Naive thymus-derived CD4-positive, alpha-beta T cell (primary cell): ENCODE measurements at regions of chr1 and their contacts with region 1.

Region 1: DNA sequence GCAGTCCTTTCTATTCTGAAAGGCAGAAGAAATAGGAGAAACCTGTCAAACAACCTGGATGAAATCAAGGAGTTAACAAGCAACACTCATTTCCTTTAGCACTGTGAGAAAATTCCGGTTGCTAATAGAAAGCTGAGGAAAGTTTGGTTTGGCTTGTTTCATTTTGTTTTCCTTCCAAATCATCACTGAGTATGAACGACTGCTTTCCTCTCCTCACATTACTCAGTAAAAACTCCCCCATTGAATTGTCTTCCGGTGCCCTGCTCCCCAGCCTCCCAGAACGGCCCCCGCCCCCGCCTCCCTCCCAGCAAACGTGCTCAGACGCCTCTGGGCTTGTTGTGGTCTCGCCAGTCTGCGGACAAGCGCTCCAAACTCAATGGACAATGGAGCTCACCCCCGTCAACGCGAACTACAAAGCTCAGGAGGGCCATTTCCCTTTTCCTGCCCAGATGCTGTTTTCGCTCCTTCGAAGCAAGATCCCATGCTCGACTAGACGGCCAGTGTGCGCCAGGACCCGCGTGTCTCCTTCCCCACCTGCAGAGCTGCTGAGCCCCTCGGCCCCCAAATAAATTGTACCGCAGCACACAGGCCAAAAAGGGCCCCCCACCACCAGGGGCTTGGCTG is 747 bp downstream of the STX6 start:
- DNase-seq: peak; percentile 12 to 67 (median 33)
- ATAC-seq: peak; percentile 21
- H3K4me3 ChIP-seq: peak overlapping the region; percentile 84
- H3K4me3 Mint-ChIP-seq: peak overlapping the region; percentile 92 to 98 (median 94)
- H3K27ac ChIP-seq: peak overlapping the region; percentile 84
- H3K27ac Mint-ChIP-seq: peak overlapping the region; percentile 93 to 100 (median 97)
- H3K4me1 ChIP-seq: peaks cover 21 to 22% of the 10 kb centered on the region in 2 donors
- H3K4me1 Mint-ChIP-seq: peaks cover 17 to 59% (median 48%) of the 10 kb centered on the region in 7 donors
- H3K27me3 ChIP-seq: no peaks in the 10 kb centered on the region
- H3K27me3 Mint-ChIP-seq: peaks cover 0 to 25% (median 0%) of the 10 kb centered on the region in 5 donors

Region 2: GRCh38 chr1:180502360-180503273 is 519.3 kb before region 1 on chr1 and contains the start of gene ACBD6:
- CTCF ChIA-PET with region 1: no interaction called
- POLR2A ChIA-PET with region 1: interaction called, 4 read pairs
- intact Hi-C with region 1: loop called (anchors 2 kb)
- DNase-seq: peak; percentile 80 to 92 (median 89)
- ATAC-seq: peak; percentile 95
- H3K4me3 ChIP-seq: peak within 1 kb of the TSS; percentile 85
- H3K4me3 Mint-ChIP-seq: peak within 1 kb of the TSS; percentile 89 to 100 (median 97)
- H3K27ac ChIP-seq: peak within 1 kb of the TSS; percentile 79
- H3K27ac Mint-ChIP-seq: peak within 1 kb of the TSS; percentile 91 to 99 (median 98)
- H3K4me1 ChIP-seq: peaks cover 10 to 18% of the 10 kb centered on the region in 2 donors
- H3K4me1 Mint-ChIP-seq: peaks cover 17 to 55% (median 38%) of the 10 kb centered on the region in 7 donors
- H3K27me3 ChIP-seq: no peaks in the 10 kb centered on the region
- H3K27me3 Mint-ChIP-seq: peaks cover 0 to 5% (median 0%) of the 10 kb centered on the region in 5 donors
- total RNA-seq, gene ACBD6: 44.2 to 75.7 (median 47.3) TPM

Region 3: DNA sequence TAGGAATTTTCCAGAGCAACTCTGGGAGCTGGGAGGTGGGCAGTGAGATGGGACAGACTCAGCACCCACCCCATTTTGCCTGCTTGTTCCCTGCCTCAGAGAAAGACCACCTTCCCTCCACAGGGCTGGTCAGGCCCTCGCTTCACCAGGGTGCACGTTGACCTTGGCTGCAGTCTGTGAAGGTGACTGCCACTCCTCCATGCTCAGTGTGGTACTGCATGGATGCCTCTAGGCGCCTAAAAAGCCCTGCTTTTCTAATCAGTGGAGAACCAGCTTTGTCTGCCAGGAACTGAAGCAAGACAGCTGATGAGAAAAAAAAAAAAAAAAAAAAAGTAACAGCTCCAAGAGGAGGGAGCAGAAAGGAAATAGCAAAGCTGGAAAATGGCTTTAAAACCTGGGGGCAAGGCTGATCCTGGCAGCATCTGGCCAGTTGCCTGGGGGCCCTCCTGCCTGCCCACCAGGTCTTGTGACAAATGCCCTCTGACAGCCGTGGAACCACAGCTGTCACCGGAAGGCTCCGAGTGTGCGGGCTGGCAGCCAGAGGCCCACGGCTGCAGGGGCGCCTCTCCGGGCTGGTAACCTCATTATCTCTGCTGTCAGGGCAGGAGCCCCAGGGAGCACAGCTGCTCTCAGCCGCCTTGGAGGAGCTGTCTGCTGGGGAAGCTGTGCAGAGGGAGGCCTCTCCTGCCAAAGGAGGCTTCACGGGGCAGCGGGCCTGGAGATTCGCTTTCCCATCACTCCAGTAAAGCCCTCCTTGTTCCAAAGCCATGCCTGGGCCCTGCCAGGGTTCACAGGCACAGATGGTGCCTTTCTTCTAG is 95.5 kb before region 1 on chr1:
- CTCF ChIA-PET with region 1: no interaction called
- POLR2A ChIA-PET with region 1: no interaction called
- intact Hi-C with region 1: no loop called
- DNase-seq: peak in 1 of 9 donors; percentile 13
- ATAC-seq: peak; percentile 28
- H3K4me3 ChIP-seq: no peak overlapping the region
- H3K4me3 Mint-ChIP-seq: no peak overlapping the region
- H3K27ac ChIP-seq: no peak overlapping the region
- H3K27ac Mint-ChIP-seq: no peak overlapping the region
- H3K4me1 ChIP-seq: no peaks in the 10 kb centered on the region
- H3K4me1 Mint-ChIP-seq: peaks cover 0 to 10% (median 0%) of the 10 kb centered on the region in 7 donors
- H3K27me3 ChIP-seq: no peaks in the 10 kb centered on the region
- H3K27me3 Mint-ChIP-seq: peaks cover 0 to 5% (median 0%) of the 10 kb centered on the region in 5 donors

Region 4: DNA sequence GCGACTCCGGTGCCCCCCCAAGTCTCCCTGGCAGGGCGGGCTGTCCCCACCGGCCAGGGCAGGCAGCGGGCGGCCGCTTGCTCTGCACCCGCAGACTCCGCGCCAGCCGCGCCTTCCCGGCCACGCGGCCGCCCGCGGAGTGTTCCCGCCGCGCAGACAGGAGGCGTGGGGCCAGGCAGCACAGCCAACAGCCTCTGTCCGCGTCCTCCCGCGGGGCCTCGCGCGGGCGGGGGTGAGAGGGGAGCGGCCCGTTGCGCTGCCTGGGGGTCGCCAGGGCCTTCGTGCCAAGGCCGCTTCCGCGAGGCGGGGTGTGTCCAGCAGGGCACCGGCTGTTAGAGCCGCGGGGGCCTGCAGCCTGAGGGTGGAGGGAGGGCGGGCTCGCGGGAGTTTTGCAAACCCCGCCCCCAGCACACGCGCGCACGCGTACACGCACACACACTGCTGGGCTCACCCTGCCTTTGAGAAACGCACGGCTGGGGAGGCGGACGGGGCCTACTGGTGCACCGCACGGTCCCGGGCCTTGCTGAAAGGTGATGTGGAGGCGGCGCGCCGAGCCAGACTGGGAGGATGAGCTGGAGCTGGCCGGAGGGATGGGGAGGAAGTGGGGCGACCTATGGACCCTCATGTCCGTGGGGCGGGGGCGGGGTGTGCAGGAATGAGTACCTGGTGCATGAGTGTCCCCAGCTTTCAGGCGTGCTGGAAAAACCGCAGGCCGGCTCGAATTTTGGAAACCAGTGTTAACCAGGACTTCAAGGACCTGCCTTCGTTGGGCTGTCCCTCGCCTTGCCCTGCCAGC is 67.7 kb before region 1 on chr1:
- CTCF ChIA-PET with region 1: no interaction called
- POLR2A ChIA-PET with region 1: no interaction called
- intact Hi-C with region 1: loop called (anchors 2 to 5 kb)
- DNase-seq: peak; percentile 32 to 79 (median 61)
- ATAC-seq: peak; percentile 91
- H3K4me3 ChIP-seq: peak overlapping the region; percentile 59
- H3K4me3 Mint-ChIP-seq: peak overlapping the region; percentile 67 to 83 (median 80)
- H3K27ac ChIP-seq: peak overlapping the region; percentile 65
- H3K27ac Mint-ChIP-seq: peak overlapping the region in 3 of 9 donors; percentile 17 to 72 (median 72)
- H3K4me1 ChIP-seq: peaks cover 0 to 6% of the 10 kb centered on the region in 2 donors
- H3K4me1 Mint-ChIP-seq: peaks cover 0 to 12% (median 4%) of the 10 kb centered on the region in 7 donors
- H3K27me3 ChIP-seq: no peaks in the 10 kb centered on the region
- H3K27me3 Mint-ChIP-seq: no peaks in the 10 kb centered on the region

Region 5: GRCh38 chr1:181010789-181011188 is 11.1 kb before region 1 on chr1:
- CTCF ChIA-PET with region 1: no interaction called
- POLR2A ChIA-PET with region 1: interaction called, 9 read pairs
- intact Hi-C with region 1: loop called in 1 of 2 experiments (anchors 2 kb)
- DNase-seq: no peak
- ATAC-seq: no peak
- H3K4me3 ChIP-seq: no peak overlapping the region
- H3K4me3 Mint-ChIP-seq: no peak overlapping the region
- H3K27ac ChIP-seq: no peak overlapping the region
- H3K27ac Mint-ChIP-seq: no peak overlapping the region
- H3K4me1 ChIP-seq: peaks cover 12 to 24% of the 10 kb centered on the region in 2 donors
- H3K4me1 Mint-ChIP-seq: peaks cover 14 to 58% (median 18%) of the 10 kb centered on the region in 7 donors
- H3K27me3 ChIP-seq: no peaks in the 10 kb centered on the region
- H3K27me3 Mint-ChIP-seq: no peaks in the 10 kb centered on the region

Region 6: DNA sequence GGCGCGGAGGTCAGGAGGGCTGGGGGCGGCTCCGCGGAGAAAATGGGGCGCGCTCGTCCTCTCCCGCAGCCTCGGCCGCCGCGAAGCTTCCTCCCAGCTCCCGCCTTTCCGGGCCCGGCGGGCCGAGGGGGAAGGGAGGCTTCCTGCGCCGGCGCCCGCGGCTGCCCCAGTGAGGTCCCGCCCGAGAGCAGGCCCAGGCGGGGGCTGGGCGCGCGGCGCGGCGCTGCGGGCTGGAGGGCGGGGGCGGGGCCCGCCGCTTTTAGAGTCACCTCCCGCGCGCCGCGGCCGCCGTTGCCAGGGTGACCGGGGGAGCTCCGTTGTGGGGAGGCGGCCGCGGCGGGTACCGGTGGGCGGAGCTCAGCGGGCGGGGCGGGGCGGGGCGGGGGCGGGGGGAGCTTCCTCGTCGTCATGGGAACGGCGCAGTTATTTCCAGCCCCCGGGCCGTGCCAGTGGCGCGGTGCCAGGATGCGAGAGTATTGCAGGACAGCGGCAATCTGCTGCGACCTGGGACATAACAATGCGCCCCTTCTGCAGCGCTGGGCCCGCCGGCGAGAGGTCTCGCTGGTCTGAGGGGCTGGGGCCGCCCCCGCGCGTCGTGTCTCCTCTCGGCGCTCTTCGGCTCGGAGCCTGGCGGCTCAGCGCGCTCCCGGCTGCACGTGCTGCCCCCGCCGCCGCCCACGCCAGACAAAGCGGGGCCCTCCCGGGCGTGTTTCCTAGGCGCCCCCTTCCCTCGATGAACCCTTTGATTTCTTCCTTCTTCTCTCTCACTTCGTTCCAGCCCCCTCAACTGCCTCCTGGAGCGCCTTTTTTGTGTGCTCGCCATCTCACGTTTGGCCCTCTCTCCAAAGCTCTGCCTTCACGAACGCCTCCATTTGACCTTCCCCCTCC is 83.5 kb after region 1 on chr1:
- CTCF ChIA-PET with region 1: no interaction called
- POLR2A ChIA-PET with region 1: interaction called, 9 read pairs
- intact Hi-C with region 1: loop called (anchors 1 kb)
- DNase-seq: peak; percentile 81 to 94 (median 90)
- ATAC-seq: peak; percentile 94
- H3K4me3 ChIP-seq: peak overlapping the region; percentile 61
- H3K4me3 Mint-ChIP-seq: peak overlapping the region; percentile 84 to 96 (median 91)
- H3K27ac ChIP-seq: peak overlapping the region; percentile 85
- H3K27ac Mint-ChIP-seq: peak overlapping the region; percentile 69 to 97 (median 89)
- H3K4me1 ChIP-seq: peaks cover 16 to 20% of the 10 kb centered on the region in 2 donors
- H3K4me1 Mint-ChIP-seq: peaks cover 22 to 76% (median 61%) of the 10 kb centered on the region in 7 donors
- H3K27me3 ChIP-seq: no peaks in the 10 kb centered on the region
- H3K27me3 Mint-ChIP-seq: peaks cover 0 to 43% (median 0%) of the 10 kb centered on the region in 5 donors

Region 7: DNA sequence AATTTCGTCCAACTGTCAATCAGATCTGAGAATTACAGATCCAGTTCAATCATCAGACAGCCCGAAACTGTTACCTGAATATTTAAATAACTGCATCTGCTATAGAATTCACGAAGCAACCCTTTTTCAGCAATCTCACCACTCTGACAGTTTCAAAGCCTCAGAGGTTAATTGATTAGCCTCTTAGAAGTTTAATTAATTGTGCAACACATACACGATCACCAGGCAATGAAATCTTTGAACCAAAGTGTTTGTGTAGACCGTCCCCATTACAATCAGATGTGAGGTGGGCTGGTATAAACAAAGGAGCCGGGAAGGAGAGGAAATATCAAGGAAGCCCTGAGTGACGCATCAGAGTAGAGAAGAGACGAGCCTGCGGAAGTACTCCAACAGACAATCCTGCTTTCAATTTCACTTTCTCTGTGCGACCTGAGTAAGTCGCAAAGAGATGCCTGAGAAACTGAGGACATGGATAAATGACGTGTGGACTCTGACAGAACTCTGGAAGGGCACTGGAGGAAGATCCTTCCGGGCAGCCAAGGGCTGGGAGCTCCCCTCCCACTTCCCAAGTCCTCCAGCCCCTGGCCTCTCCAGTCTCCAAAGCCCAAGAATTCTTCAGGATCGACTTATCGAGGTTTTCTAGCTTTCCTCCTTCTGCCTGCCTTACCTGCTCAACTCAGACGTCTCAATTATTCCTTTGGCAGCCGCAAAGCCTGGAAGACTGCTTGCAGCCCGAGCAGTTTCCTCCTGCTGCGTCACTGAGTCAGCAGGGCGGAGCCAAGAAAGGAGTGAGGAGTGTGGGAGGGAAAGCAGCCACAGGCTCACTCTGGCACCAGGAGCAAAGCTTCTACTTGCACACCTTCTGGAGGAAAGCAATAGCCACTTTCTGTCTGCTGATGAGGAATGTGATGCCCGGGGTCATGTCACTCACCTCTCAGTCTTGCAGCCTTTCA is 1566.9 kb after region 1 on chr1 and contains the start of gene RNASEL:
- CTCF ChIA-PET with region 1: no interaction called
- POLR2A ChIA-PET with region 1: no interaction called
- intact Hi-C with region 1: loop called in 1 of 2 experiments (anchors 2 kb)
- DNase-seq: peak; percentile 24 to 72 (median 65)
- ATAC-seq: peak; percentile 89
- H3K4me3 ChIP-seq: peak within 1 kb of the TSS; percentile 92
- H3K4me3 Mint-ChIP-seq: peak within 1 kb of the TSS; percentile 93 to 99 (median 98)
- H3K27ac ChIP-seq: peak within 1 kb of the TSS; percentile 97
- H3K27ac Mint-ChIP-seq: peak within 1 kb of the TSS; percentile 97 to 100 (median 99)
- H3K4me1 ChIP-seq: peaks cover 23 to 27% of the 10 kb centered on the region in 2 donors
- H3K4me1 Mint-ChIP-seq: peaks cover 31 to 60% (median 51%) of the 10 kb centered on the region in 7 donors
- H3K27me3 ChIP-seq: no peaks in the 10 kb centered on the region
- H3K27me3 Mint-ChIP-seq: peaks cover 0 to 9% (median 0%) of the 10 kb centered on the region in 5 donors
- total RNA-seq, gene RNASEL: 5.7 to 34.9 (median 12.1) TPM